ENCODE measurements at regions of chr3 and their contacts with region 1.

Region 1: GRCh38 chr3:141441381-141442364 is 45.2 kb upstream of the RASA2 start:
- DNase-seq: peak; percentile 35 to 82 (median 74)
- ATAC-seq: peak; percentile 44 to 87 (median 82)
- H3K4me3 ChIP-seq: peak overlapping the region in 2 of 12 donors; percentile 18 to 23
- H3K27ac ChIP-seq: peak overlapping the region; percentile 65 to 89 (median 80)
- H3K4me1 ChIP-seq: peaks cover 3 to 85% (median 57%) of the 10 kb centered on the region in 12 donors
- H3K27me3 ChIP-seq: no peaks in the 10 kb centered on the region
- CTCF ChIP-seq: peak; percentile 48 to 89 (median 85)
- POLR2A ChIP-seq: no peak

Region 2: DNA sequence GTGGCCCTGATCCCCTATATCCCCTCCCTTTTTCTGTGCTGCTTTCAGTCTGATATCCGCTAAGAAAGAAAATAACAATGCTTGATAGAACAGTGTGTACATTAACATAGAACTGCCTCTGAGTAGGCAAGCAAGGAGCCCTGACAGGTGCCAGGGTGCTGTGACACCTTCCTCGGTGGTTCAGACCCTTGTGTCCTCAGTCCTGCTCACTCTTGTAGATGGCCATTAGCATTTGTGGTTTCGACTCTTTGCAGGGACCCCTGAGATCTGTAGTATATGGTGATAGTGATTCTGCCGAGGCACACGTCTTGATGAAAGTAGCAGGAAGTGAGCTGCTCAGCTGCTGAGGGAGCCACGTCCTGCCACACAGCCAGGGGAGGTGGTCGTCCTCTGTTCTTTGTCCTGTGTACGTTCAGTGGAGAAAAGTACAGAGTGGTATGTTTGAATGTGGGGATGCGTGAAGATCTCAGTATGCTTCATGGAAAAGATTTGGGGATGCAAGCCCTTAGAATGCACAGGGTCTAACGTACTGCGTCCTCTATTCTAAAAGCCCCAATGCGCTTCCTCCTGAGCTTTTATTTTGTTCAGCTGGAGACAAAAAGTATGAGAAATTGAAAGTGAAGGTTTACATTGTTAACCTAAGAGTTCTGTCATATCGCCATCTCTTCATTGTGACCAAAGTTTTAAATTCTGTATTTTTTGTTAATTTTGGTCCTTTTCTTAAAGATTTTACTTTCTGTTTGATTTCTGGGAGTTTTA is 174.7 kb before region 1 on chr3:
- intact Hi-C with region 1: no loop called
- DNase-seq: no peak
- ATAC-seq: no peak
- H3K4me3 ChIP-seq: peak overlapping the region in 10 of 12 donors; percentile 3 to 47 (median 33)
- H3K27ac ChIP-seq: peak overlapping the region in 1 of 12 donors; percentile 75
- H3K4me1 ChIP-seq: peaks cover 0 to 17% (median 5%) of the 10 kb centered on the region in 12 donors
- H3K27me3 ChIP-seq: no peaks in the 10 kb centered on the region
- CTCF ChIP-seq: no peak
- POLR2A ChIP-seq: no peak

Region 3: DNA sequence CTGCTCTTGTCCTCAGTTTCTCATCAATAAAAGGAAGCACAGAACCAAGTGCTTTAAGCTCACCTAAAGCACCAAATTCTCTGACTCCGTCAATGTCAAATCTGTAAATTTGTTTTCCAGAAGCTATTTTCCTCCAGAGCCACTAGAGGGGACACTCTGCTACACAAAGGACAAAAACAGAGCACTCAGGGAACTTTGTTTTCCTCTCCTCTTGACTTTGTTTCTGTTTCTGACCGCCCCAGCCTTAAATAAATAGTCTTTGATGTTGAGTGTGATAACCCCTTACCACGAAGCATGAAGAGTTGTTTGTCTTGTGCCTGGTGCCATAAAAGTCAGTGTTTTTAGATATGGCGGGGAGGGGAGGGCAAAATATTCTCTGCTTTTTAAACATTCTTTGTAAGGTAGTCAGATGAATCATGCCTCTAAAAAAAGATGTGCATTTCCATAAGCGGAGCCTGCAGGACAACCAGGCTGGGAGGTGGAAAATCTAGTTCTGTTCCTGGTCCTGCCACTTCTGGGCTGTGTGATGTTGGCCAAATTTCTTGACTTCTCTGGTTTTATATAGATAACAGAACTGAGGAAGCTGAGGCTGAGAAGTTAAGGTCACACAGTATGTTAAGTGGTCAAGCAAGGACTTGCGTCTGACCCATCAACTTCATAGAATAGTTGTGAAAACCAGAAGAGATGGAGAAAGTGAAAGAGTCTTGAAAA is 80.6 kb before region 1 on chr3:
- intact Hi-C with region 1: loop called in 4 of 10 experiments (anchors 2 to 5 kb)
- DNase-seq: peak in 1 of 5 donors; percentile 23
- ATAC-seq: peak; percentile 72 to 88 (median 82)
- H3K4me3 ChIP-seq: peak overlapping the region in 6 of 12 donors; percentile 6 to 33 (median 26)
- H3K27ac ChIP-seq: peak overlapping the region in 10 of 12 donors; percentile 10 to 60 (median 44)
- H3K4me1 ChIP-seq: peaks cover 0 to 12% (median 4%) of the 10 kb centered on the region in 12 donors
- H3K27me3 ChIP-seq: no peaks in the 10 kb centered on the region
- CTCF ChIP-seq: peak; percentile 63 to 92 (median 84)
- POLR2A ChIP-seq: no peak

Region 4: GRCh38 chr3:141368062-141368924 is 73.4 kb before region 1 on chr3 and contains the start of gene ZBTB38:
- intact Hi-C with region 1: loop called in 5 of 10 experiments (anchors 2 to 5 kb)
- DNase-seq: peak; percentile 91 to 98 (median 93)
- ATAC-seq: peak; percentile 92 to 96 (median 95)
- H3K4me3 ChIP-seq: peak within 1 kb of the TSS; percentile 3 to 54 (median 44)
- H3K27ac ChIP-seq: peak within 1 kb of the TSS; percentile 87 to 97 (median 94)
- H3K4me1 ChIP-seq: peaks cover 12 to 64% (median 42%) of the 10 kb centered on the region in 12 donors
- H3K27me3 ChIP-seq: no peaks in the 10 kb centered on the region
- CTCF ChIP-seq: no peak
- POLR2A ChIP-seq: peak in 1 of 2 donors; percentile 88
- total RNA-seq, gene ZBTB38: 97.5 to 189 (median 128) TPM

Region 5: GRCh38 chr3:141402476-141403171 is 39.0 kb before region 1 on chr3:
- intact Hi-C with region 1: loop called in 6 of 10 experiments (anchors 2 to 5 kb)
- DNase-seq: peak; percentile 79 to 88 (median 88)
- ATAC-seq: peak; percentile 69 to 84 (median 80)
- H3K4me3 ChIP-seq: peak overlapping the region; percentile 62 to 92 (median 72)
- H3K27ac ChIP-seq: peak overlapping the region; percentile 94 to 99 (median 98)
- H3K4me1 ChIP-seq: peaks cover 8 to 81% (median 58%) of the 10 kb centered on the region in 12 donors
- H3K27me3 ChIP-seq: no peaks in the 10 kb centered on the region
- CTCF ChIP-seq: peak in 1 of 12 donors; percentile 7
- POLR2A ChIP-seq: peak in 1 of 2 donors; percentile 57

Region 6: DNA sequence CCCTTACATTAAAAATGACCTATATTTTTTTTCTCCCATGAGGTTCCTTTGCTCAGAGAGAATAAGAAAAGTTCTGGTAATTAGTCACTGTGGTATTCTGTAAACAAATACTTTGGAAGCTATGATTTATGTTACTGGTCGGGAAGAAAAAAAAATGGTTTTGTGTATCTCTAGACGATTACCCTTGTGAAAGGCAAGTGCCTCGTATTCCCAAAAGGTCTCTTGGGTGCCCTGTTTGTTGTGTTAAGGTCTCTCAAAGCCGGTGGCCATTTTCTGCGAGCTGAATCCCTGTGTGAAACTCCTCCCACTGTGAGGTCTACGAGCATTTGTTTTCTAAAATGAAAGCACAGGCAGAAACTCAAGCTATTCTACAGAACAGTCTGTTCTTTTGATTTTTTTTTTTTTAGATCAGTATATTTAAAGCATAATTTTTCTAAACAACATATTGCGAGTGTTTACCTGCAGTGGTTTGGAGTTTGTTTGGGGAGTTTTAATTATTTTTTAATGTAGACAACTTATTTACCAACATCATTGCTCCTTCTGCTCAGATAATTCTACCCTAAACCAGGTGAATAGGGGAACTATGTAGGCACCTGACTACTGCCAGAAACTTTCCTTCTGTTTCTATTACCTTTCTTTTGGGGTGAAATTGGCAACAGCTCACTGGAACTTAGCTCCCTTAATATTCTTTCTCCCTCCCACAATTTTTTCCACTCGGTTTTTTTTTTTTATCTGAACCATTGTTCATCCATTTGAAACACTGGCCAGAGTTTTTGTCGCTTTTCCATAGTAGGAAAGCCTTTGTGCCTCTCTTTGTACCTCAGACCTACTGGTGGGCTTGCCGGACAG is 29.4 kb before region 1 on chr3:
- intact Hi-C with region 1: loop called in 2 of 10 experiments (anchors 2 to 5 kb)
- DNase-seq: peak in 4 of 5 donors; percentile 62 to 68 (median 67)
- ATAC-seq: peak; percentile 32 to 70 (median 64)
- H3K4me3 ChIP-seq: peak overlapping the region in 10 of 12 donors; percentile 12 to 53 (median 34)
- H3K27ac ChIP-seq: peak overlapping the region; percentile 93 to 99 (median 98)
- H3K4me1 ChIP-seq: peaks cover 13 to 99% (median 90%) of the 10 kb centered on the region in 12 donors
- H3K27me3 ChIP-seq: no peaks in the 10 kb centered on the region
- CTCF ChIP-seq: no peak
- POLR2A ChIP-seq: no peak